Activated T-helper 1 cell treated with anti-CD3 and anti-CD28 coated beads, Interleukin-12 subunit alpha, Interleukin-12 subunit beta, Interleukin-2, Interleukin-4 antibody, amounts not matched to agents 30 ng/mL and 10 ng/mL and 1 ng/mL, durations not matched to agents 14 hours and 24 hours and 36 hours (primary cell): ENCODE measurements at regions of chr7 and their contacts with region 1.

Region 1: DNA sequence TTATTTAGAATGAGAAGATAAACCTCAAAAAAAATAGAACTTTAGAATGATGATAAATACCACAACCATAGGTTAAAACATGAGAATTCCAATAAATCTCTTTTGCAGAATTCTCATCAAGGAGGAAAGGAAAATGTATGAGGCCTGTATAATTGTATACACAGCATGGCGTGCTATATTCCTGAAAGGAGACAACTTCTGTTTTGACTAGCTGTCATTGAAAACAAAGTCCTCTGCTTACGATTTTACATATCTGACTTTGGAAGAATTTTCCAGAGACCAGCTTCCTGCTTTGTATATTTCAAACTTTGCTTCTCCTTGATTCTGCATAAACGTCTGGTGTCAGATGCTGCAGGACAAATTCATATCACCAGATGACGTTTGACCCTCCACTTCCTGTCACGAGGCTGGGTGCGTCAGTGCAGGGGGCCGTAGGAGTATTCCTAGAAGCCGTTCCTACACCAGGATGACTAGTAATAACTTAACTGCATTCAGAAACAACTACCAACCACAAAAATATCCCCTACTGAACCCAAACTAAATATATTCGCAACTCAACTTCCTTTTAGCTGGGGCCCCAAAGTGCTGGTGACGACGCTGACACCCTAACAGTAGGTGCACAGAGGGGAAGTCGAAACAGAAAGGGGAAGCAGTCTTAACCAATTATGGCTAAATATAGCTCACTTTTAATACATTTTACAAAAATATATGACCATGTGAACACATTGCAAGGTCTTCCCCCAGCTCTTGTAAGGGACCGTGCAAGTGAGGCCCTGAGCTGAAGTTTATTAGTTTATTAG is 178.6 kb upstream of the INHBA start:
- DNase-seq: peak; percentile 76
- H3K4me3 Mint-ChIP-seq: peak overlapping the region; percentile 71
- H3K27ac Mint-ChIP-seq: peak overlapping the region; percentile 96
- H3K4me1 Mint-ChIP-seq: peaks cover 60% of the 10 kb centered on the region
- H3K27me3 Mint-ChIP-seq: no peaks in the 10 kb centered on the region

Region 2: GRCh38 chr7:41628901-41629300 is 252.6 kb before region 1 on chr7:
- intact Hi-C with region 1: loop called (anchors 2 kb)
- DNase-seq: no peak
- H3K4me3 Mint-ChIP-seq: no peak overlapping the region
- H3K27ac Mint-ChIP-seq: no peak overlapping the region
- H3K4me1 Mint-ChIP-seq: peaks cover 23% of the 10 kb centered on the region
- H3K27me3 Mint-ChIP-seq: no peaks in the 10 kb centered on the region

Region 3: DNA sequence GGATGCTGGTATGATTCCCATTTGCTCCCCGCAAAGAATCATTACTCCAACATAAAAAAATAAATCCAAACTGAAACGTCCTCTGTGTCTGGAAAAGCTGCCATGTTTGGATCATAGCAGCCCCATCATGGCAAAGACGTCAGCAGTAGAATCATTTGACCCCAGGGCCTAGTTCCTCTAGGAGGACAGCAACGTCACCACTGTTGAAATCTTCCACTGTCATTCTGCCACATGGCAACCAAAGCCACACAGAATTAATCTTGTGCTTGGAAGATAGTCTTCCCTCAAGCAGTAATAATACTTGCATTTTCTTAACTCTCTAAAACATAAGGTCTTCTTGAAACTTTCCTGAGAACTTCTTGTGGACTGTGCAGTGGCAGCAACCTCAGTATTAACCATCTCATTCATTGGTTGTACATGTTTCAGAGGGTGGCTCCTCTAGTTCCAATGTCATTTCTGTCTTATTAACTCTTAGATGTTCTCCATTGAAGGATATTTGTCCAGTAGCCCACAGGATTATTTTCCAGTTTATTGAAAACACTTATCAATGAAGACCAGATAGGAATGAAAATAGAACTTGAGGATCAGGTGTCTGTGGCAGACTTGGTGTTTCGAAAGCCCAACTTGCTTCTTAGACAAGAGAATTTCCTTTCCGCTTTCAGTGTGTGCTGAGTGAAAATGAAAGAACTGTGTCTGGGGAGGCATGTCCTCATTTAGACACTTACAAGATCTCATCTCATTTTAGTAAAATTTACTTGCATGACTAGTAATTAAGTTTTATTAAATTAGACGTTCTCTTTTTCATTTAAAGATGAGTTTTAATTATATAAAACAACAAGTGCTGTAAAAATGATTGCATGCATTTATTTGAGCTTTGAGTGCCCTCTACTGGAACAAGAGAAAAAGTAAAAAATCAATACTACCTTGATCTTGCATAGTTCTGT is 149.8 kb before region 1 on chr7:
- intact Hi-C with region 1: loop called (anchors 5 kb)
- DNase-seq: no peak
- H3K4me3 Mint-ChIP-seq: no peak overlapping the region
- H3K27ac Mint-ChIP-seq: peak overlapping the region; percentile 1
- H3K4me1 Mint-ChIP-seq: peaks cover 21% of the 10 kb centered on the region
- H3K27me3 Mint-ChIP-seq: peaks cover 4% of the 10 kb centered on the region

Region 4: DNA sequence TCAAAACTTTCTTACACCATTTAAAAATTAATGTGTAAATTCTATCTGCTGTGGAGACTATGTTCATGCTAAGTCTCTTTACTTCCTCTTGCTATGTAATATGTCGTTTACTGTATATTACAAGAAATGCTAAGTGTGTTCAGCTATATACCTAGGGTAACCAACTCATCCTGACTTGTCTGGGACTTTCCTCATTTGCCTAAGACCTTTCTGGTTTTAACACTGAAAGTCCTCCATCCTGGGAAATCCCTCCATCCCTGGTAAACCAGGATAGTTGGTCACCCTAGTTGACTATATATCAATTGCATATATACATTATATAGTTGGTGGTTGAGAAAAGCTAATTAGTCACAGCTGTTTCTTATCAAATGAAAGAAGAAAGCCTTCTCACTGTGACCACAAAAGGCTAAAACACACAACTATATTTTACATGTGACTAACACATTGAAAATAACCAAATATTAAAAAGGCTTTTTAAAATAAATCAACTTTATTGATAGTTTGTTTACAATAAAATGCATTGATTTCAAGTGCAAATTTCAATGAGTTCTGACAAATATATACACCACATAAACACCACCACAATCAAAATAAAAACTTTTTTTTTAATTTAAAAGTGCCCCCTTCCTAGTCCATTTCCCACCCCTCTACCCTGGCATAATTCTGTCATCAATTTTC is 10.9 kb before region 1 on chr7:
- intact Hi-C with region 1: loop called (anchors 1 kb)
- DNase-seq: no peak
- H3K4me3 Mint-ChIP-seq: no peak overlapping the region
- H3K27ac Mint-ChIP-seq: peak overlapping the region; percentile 57
- H3K4me1 Mint-ChIP-seq: peaks cover 59% of the 10 kb centered on the region
- H3K27me3 Mint-ChIP-seq: no peaks in the 10 kb centered on the region

Region 5: DNA sequence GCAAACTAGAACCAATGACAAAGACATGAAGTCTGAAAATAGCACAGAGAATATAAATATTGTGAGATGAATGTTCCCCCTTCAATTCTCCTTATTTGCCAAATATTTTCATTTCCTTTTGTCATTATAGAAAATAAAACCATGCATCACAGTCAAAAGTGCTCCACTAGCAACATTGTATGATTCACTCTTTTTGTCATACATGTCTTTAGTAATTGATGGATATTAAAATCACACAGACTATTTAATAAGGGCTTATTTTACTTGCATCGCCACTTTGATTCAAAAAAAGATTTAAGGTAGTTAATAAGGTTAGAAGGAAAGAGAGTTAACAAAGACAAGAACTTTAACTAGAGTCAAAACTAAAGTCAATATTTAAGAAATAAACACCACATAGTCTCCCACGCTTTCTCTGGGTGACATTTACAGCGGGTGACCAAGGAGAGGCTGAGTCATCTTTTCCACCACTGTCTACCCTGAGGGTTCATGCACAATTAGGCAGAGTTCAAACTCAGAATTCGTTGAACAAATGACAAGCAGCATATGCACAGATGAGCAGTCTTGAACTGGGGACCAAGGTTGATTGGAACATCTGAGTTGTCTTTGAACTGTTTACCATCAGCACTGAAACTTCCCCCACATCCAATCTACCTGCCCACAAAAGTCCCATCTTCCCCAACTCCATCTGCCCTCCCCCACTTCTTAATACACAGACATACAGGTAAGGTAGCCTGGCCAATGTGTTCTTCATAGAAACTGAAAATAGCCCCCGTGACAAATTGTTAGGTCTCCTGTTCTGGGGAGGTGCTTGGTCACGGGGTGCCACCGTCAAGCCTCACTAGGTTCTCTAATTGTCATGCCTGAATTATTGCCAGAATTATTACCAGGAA is 987.8 kb after region 1 on chr7:
- intact Hi-C with region 1: loop called (anchors 1 kb)
- DNase-seq: peak; percentile 19
- H3K4me3 Mint-ChIP-seq: peak overlapping the region; percentile 19
- H3K27ac Mint-ChIP-seq: peak overlapping the region; percentile 88
- H3K4me1 Mint-ChIP-seq: peaks cover 24% of the 10 kb centered on the region
- H3K27me3 Mint-ChIP-seq: peaks cover 2% of the 10 kb centered on the region

Region 6: GRCh38 chr7:43071604-43072003 is 1190.1 kb after region 1 on chr7:
- intact Hi-C with region 1: loop called (anchors 5 kb)
- DNase-seq: no peak
- H3K4me3 Mint-ChIP-seq: no peak overlapping the region
- H3K27ac Mint-ChIP-seq: no peak overlapping the region
- H3K4me1 Mint-ChIP-seq: peaks cover 25% of the 10 kb centered on the region
- H3K27me3 Mint-ChIP-seq: peaks cover 9% of the 10 kb centered on the region